Naive thymus-derived CD4-positive, alpha-beta T cell (primary cell): ENCODE measurements at regions of chr1 and their contacts with region 1.

Region 1: DNA sequence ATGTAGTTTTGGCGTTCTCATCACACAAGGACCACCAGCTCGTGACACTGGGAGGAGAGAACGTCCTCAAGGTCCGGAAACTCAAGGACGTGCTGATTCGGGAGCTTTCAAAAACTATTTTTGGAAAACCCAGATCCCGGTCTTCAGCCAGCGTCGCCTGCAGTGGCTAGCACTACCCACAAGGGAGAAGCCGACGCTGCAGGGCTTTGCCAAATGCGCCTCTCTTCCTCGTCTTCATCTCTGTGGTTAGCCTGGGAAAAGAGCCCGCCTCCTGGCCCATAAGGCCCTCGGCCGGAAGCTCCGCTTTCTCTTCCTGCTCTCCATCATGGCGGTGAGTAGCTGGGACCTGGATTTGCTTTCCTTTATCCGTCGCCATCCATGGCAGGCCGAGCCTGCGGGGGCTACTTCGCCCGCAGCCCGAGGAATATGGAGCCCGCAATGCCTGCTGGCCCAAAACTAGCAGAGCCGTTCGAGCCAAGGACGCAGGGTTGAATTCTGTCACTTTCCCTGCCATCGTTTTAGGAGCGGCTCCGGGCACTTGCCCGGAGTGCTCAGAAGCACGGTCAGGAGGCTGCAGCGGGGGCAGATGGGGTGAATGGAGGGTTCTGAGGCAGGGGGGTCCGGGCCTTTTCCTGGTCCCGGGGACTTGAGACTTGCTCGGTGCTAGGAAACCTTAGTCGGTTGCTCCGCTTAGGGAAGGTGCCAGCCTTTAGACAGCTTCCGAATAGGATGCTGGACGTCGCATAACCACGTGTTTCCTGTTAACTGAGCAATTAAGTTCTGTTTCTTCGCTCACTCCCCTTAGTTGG is at the start of gene RPL11:
- DNase-seq: peak; percentile 60 to 92 (median 88)
- ATAC-seq: peak; percentile 100
- H3K4me3 ChIP-seq: peak within 1 kb of the TSS; percentile 82
- H3K4me3 Mint-ChIP-seq: peak within 1 kb of the TSS; percentile 87 to 96 (median 94)
- H3K27ac ChIP-seq: peak within 1 kb of the TSS; percentile 88
- H3K27ac Mint-ChIP-seq: peak within 1 kb of the TSS; percentile 87 to 97 (median 93)
- H3K4me1 ChIP-seq: peaks cover 19 to 20% of the 10 kb centered on the region in 2 donors
- H3K4me1 Mint-ChIP-seq: peaks cover 33 to 50% (median 45%) of the 10 kb centered on the region in 7 donors
- H3K27me3 ChIP-seq: no peaks in the 10 kb centered on the region
- H3K27me3 Mint-ChIP-seq: no peaks in the 10 kb centered on the region
- total RNA-seq, gene RPL11: 1,206 to 2,420 (median 2,172) TPM

Region 2: DNA sequence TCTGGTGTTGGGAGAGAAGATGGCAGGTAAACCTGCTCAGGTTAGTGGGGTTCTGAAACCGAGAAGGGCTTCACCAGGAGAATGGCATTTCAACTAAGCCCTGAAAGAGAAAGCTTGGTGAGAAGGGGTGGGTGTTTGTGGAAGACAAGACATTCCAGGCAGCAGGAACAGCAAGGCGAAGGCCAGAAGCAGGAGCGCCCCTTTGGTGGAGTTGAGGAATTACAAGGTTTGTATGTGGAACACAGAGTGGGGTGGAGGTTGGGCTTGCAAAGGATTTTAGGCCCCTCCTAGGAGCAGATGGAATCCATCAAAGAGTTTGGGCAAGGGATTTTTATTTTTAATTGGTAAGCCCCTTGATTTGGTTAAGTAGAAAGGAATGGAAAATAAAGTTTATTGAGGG is 26.8 kb after region 1 on chr1:
- CTCF ChIA-PET with region 1: no interaction called
- POLR2A ChIA-PET with region 1: no interaction called
- intact Hi-C with region 1: no loop called
- DNase-seq: no peak
- ATAC-seq: no peak
- H3K4me3 ChIP-seq: no peak overlapping the region
- H3K4me3 Mint-ChIP-seq: no peak overlapping the region
- H3K27ac ChIP-seq: no peak overlapping the region
- H3K27ac Mint-ChIP-seq: peak overlapping the region in 1 of 9 donors; percentile 43
- H3K4me1 ChIP-seq: no peaks in the 10 kb centered on the region
- H3K4me1 Mint-ChIP-seq: peaks cover 0 to 17% (median 3%) of the 10 kb centered on the region in 7 donors
- H3K27me3 ChIP-seq: no peaks in the 10 kb centered on the region
- H3K27me3 Mint-ChIP-seq: no peaks in the 10 kb centered on the region

Region 3: GRCh38 chr1:23743287-23744052 is 51.8 kb after region 1 on chr1 and contains the start of gene ELOA:
- CTCF ChIA-PET with region 1: no interaction called
- POLR2A ChIA-PET with region 1: interaction called, 30 read pairs
- intact Hi-C with region 1: loop called (anchors 1 kb)
- DNase-seq: peak; percentile 68 to 84 (median 77)
- ATAC-seq: peak; percentile 98
- H3K4me3 ChIP-seq: peak within 1 kb of the TSS; percentile 87
- H3K4me3 Mint-ChIP-seq: peak within 1 kb of the TSS; percentile 90 to 93 (median 92)
- H3K27ac ChIP-seq: peak within 1 kb of the TSS; percentile 96
- H3K27ac Mint-ChIP-seq: peak within 1 kb of the TSS; percentile 80 to 95 (median 91)
- H3K4me1 ChIP-seq: peaks cover 22 to 39% of the 10 kb centered on the region in 2 donors
- H3K4me1 Mint-ChIP-seq: peaks cover 35 to 52% (median 49%) of the 10 kb centered on the region in 7 donors
- H3K27me3 ChIP-seq: no peaks in the 10 kb centered on the region
- H3K27me3 Mint-ChIP-seq: no peaks in the 10 kb centered on the region
- total RNA-seq, gene ELOA: 28.0 to 36.1 (median 30.4) TPM

Region 4: GRCh38 chr1:24567792-24568388 is 876.2 kb after region 1 on chr1:
- CTCF ChIA-PET with region 1: no interaction called
- POLR2A ChIA-PET with region 1: no interaction called
- intact Hi-C with region 1: no loop called
- DNase-seq: peak in 4 of 9 donors; percentile 15 to 40 (median 29)
- ATAC-seq: peak; percentile 59
- H3K4me3 ChIP-seq: no peak overlapping the region
- H3K4me3 Mint-ChIP-seq: no peak overlapping the region
- H3K27ac ChIP-seq: no peak overlapping the region
- H3K27ac Mint-ChIP-seq: peak overlapping the region in 4 of 9 donors; percentile 18 to 74 (median 60)
- H3K4me1 ChIP-seq: no peaks in the 10 kb centered on the region
- H3K4me1 Mint-ChIP-seq: peaks cover 3 to 14% (median 8%) of the 10 kb centered on the region in 7 donors
- H3K27me3 ChIP-seq: no peaks in the 10 kb centered on the region
- H3K27me3 Mint-ChIP-seq: peaks cover 0 to 12% (median 0%) of the 10 kb centered on the region in 5 donors